ENCODE measurements at regions of chr9 and their contacts with region 1.

Region 1: DNA sequence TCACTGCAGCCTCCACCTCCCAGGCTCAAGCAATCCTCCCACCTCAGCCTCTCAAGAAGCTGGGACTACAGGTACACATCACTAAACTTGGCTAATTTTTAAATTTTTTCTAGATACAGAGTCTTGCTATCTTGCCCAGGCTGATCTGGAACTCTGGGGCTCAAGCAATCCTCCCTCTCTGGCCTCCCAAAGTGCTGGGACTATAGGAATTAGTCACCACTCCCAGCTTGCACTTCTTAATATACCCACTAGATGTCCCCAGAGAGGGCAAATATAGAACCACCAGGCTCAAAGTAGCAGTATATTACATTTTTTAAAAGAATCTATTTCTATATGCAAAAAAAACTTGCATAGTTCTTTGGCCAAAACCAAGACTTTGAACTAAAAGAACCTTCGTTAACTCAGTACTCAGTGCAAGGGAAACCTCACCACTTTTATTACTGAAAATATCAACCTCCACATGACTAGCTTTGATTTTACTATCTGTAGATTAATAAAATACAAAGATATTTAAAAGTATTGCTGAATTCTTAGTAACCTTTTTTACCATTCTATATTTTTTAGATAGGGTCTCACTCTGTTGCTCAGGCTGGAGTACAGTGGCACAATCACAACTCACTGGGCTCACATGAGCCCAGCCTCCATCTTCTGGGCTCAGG is 25.8 kb upstream of the HSD17B3 start:
- DNase-seq: peak in 8 of 9 donors; percentile 18 to 70 (median 54)
- ATAC-seq: peak; percentile 87
- H3K4me3 ChIP-seq: no peak overlapping the region
- H3K4me3 Mint-ChIP-seq: no peak overlapping the region
- H3K27ac ChIP-seq: no peak overlapping the region
- H3K27ac Mint-ChIP-seq: no peak overlapping the region
- H3K4me1 ChIP-seq: no peaks in the 10 kb centered on the region
- H3K4me1 Mint-ChIP-seq: no peaks in the 10 kb centered on the region
- H3K27me3 ChIP-seq: no peaks in the 10 kb centered on the region
- H3K27me3 Mint-ChIP-seq: no peaks in the 10 kb centered on the region

Region 2: GRCh38 chr9:96441798-96442445 is 114.1 kb after region 1 on chr9:
- CTCF ChIA-PET with region 1: interaction called, 3 read pairs
- POLR2A ChIA-PET with region 1: no interaction called
- intact Hi-C with region 1: loop called in 1 of 2 experiments (anchors 1 kb)
- DNase-seq: peak in 1 of 9 donors; percentile 13
- ATAC-seq: no peak
- H3K4me3 ChIP-seq: no peak overlapping the region
- H3K4me3 Mint-ChIP-seq: no peak overlapping the region
- H3K27ac ChIP-seq: no peak overlapping the region
- H3K27ac Mint-ChIP-seq: no peak overlapping the region
- H3K4me1 ChIP-seq: no peaks in the 10 kb centered on the region
- H3K4me1 Mint-ChIP-seq: no peaks in the 10 kb centered on the region
- H3K27me3 ChIP-seq: no peaks in the 10 kb centered on the region
- H3K27me3 Mint-ChIP-seq: peaks cover 0 to 14% (median 0%) of the 10 kb centered on the region in 5 donors

Region 3: DNA sequence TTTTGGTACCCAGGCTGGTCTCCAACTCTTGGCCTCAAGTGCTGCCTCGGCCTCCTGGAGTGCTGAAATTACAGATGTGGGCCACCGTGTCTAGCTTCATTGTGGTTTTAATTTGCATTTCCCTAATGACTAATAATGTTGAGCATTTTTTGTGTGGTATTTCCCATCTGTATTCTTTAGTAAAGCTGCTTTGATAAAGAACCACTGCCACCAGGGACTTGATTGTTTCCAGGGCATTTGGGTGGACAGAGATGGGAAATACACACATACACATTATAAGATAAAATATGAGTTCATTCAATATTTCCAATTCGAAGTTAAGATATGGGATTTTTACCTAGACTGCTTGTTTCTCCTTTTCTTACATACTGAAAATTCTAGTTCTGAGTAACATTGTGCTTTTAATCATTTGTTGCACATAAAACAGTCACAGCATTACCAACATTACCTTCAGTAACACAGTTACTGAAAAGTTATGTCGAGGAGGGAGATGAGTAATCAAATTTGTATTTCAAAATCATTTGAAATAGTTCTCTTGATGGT is 151.1 kb after region 1 on chr9:
- CTCF ChIA-PET with region 1: no interaction called
- POLR2A ChIA-PET with region 1: no interaction called
- intact Hi-C with region 1: loop called in 1 of 2 experiments (anchors 5 kb)
- DNase-seq: no peak
- ATAC-seq: no peak
- H3K4me3 ChIP-seq: no peak overlapping the region
- H3K4me3 Mint-ChIP-seq: no peak overlapping the region
- H3K27ac ChIP-seq: no peak overlapping the region
- H3K27ac Mint-ChIP-seq: no peak overlapping the region
- H3K4me1 ChIP-seq: no peaks in the 10 kb centered on the region
- H3K4me1 Mint-ChIP-seq: peaks cover 0 to 9% (median 3%) of the 10 kb centered on the region in 7 donors
- H3K27me3 ChIP-seq: no peaks in the 10 kb centered on the region
- H3K27me3 Mint-ChIP-seq: no peaks in the 10 kb centered on the region

Region 4: GRCh38 chr9:96585426-96585825 is 257.6 kb after region 1 on chr9:
- CTCF ChIA-PET with region 1: no interaction called
- POLR2A ChIA-PET with region 1: no interaction called
- intact Hi-C with region 1: no loop called
- DNase-seq: no peak
- ATAC-seq: no peak
- H3K4me3 ChIP-seq: no peak overlapping the region
- H3K4me3 Mint-ChIP-seq: no peak overlapping the region
- H3K27ac ChIP-seq: no peak overlapping the region
- H3K27ac Mint-ChIP-seq: no peak overlapping the region
- H3K4me1 ChIP-seq: no peaks in the 10 kb centered on the region
- H3K4me1 Mint-ChIP-seq: peaks cover 0 to 11% (median 9%) of the 10 kb centered on the region in 7 donors
- H3K27me3 ChIP-seq: peaks cover 0 to 5% of the 10 kb centered on the region in 2 donors
- H3K27me3 Mint-ChIP-seq: peaks cover 5 to 22% (median 13%) of the 10 kb centered on the region in 5 donors

Region 5: DNA sequence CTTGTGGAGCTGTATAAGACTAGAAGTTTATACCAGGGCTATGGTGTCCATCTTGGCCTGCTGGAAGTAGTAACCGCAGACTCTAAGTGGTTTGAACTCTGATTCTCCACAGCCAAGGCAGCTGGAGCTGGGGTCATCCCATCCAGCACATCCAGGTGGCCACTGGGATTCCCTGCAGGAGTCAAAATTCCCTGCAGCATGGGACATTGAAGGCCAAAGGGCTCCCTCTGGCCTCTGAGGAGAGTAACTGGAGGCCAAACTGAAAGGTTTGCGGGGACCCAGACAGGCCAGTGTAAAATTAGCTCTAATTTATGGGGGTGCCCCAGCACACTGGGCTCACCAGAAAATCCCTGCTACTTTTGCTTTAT is 339.5 kb after region 1 on chr9:
- CTCF ChIA-PET with region 1: interaction called, 6 read pairs
- POLR2A ChIA-PET with region 1: no interaction called
- intact Hi-C with region 1: loop called (anchors 1 kb)
- DNase-seq: no peak
- ATAC-seq: no peak
- H3K4me3 ChIP-seq: no peak overlapping the region
- H3K4me3 Mint-ChIP-seq: no peak overlapping the region
- H3K27ac ChIP-seq: no peak overlapping the region
- H3K27ac Mint-ChIP-seq: no peak overlapping the region
- H3K4me1 ChIP-seq: no peaks in the 10 kb centered on the region
- H3K4me1 Mint-ChIP-seq: peaks cover 0 to 1% (median 0%) of the 10 kb centered on the region in 7 donors
- H3K27me3 ChIP-seq: no peaks in the 10 kb centered on the region
- H3K27me3 Mint-ChIP-seq: peaks cover 0 to 20% (median 10%) of the 10 kb centered on the region in 5 donors